Vagina (tissue), 2 donors: ENCODE measurements at regions of chr1 and their contacts with region 1.

Region 1: DNA sequence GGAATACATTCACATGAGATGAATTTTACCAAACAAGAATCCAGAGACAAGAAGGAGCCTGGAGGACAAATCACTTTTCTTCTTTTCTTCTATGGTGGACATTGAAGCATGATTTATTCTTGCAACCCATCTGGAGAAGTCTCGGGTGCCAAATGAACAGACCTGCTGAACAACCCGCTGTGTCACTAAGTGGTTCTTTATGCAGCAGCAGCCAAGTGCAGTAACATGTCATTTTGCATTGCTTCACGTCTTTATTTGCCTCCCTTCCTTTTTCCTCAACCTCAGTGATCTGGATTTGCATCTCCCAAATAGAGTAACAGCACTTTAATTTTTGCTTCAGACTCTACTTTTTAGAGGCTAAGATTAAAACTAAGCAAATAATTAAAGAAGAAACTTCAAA is 50.0 kb upstream of the TENT5C start:
- DNase-seq: peak in 1 of 2 donors; percentile 29
- H3K4me3 ChIP-seq: no peak overlapping the region
- H3K27ac ChIP-seq: no peak overlapping the region
- H3K4me1 ChIP-seq: no peaks in the 10 kb centered on the region
- H3K27me3 ChIP-seq: no peaks in the 10 kb centered on the region
- CTCF ChIP-seq: no peak
- POLR2A ChIP-seq: no peak

Region 2: DNA sequence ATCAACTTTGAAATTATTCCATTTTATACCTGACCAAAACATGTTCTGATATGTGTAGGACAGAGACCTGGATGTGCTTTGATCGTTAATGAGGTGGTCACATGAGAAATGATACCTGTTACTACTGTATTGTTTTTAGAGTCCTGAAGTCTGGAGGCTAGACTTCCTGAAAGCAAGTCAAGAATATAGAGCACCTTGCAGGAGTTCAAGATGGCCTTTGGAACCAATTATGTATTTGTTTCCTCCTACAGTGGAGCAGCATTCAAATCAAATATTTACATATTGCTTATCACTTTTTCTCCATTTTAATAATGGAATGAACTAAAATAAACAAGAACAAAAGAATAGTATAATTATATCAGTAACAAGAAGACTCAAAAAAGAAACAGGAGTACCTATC is 32.7 kb before region 1 on chr1:
- intact Hi-C with region 1: no loop called
- DNase-seq: no peak
- H3K4me3 ChIP-seq: no peak overlapping the region
- H3K27ac ChIP-seq: no peak overlapping the region
- H3K4me1 ChIP-seq: no peaks in the 10 kb centered on the region
- H3K27me3 ChIP-seq: no peaks in the 10 kb centered on the region
- CTCF ChIP-seq: no peak
- POLR2A ChIP-seq: no peak

Region 3: GRCh38 chr1:119336848-119337247 is 1781.0 kb after region 1 on chr1:
- intact Hi-C with region 1: loop called (anchors 5 kb)
- DNase-seq: no peak
- H3K4me3 ChIP-seq: no peak overlapping the region
- H3K27ac ChIP-seq: no peak overlapping the region
- H3K4me1 ChIP-seq: no peaks in the 10 kb centered on the region
- H3K27me3 ChIP-seq: no peaks in the 10 kb centered on the region
- CTCF ChIP-seq: no peak
- POLR2A ChIP-seq: no peak